Activated B cell treated with CpG ODN at 0.5 μM for 24 hours (primary cell): ENCODE measurements at regions of chr5 and their contacts with region 1.

Region 1: DNA sequence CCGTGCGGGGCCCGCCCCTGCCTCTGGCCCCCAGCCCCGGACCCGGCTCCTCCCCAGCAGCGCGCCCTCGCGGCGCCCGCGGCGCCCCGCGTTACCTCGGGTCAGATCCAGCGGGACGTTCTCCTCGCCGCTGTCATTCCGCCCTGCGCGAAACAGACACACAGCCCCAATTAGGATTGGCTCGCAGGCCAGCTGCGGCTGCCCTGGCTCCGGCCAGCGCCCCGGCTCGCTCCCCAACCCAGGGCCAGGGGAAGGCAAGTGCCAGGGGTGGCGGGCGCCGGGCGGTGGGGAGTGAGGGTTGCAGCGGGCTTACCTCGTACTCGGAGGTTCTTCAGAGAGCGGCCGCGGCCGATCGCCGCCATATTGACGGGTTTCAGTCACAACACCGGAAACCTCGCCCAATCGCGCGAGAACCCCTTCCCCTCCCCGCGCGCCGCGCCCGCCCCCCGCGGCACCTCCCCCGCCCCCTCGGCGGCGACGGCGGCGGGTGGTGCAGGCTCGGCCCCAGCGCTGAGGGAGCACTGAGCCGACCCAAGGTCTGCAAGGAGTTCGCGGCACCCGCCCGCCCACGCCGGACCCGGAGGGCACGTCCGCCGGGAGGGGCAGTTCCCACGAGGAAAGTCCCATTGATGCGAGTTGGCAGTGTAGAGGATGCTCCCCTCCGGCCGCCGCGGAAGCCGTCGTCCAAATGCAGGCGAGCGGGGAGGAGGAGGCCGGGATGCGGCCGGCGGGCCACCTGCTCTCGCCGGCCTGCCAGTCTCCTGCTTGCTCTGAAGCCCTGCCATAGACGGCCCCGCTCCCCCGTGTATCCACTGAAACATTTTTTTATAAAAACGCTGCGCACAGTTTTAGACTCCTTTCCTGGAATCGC is at the start of gene RICTOR:
- DNase-seq: peak; percentile 92
- ATAC-seq: peak; percentile 81
- H3K4me3 Mint-ChIP-seq: peak within 1 kb of the TSS; percentile 97
- H3K27ac Mint-ChIP-seq: peak within 1 kb of the TSS; percentile 96
- H3K4me1 Mint-ChIP-seq: peaks cover 53% of the 10 kb centered on the region
- H3K27me3 Mint-ChIP-seq: no peaks in the 10 kb centered on the region
- CTCF ChIP-seq: no peak
- total RNA-seq, gene RICTOR: 46.4 and 51.8 TPM in 2 replicates

Region 2: DNA sequence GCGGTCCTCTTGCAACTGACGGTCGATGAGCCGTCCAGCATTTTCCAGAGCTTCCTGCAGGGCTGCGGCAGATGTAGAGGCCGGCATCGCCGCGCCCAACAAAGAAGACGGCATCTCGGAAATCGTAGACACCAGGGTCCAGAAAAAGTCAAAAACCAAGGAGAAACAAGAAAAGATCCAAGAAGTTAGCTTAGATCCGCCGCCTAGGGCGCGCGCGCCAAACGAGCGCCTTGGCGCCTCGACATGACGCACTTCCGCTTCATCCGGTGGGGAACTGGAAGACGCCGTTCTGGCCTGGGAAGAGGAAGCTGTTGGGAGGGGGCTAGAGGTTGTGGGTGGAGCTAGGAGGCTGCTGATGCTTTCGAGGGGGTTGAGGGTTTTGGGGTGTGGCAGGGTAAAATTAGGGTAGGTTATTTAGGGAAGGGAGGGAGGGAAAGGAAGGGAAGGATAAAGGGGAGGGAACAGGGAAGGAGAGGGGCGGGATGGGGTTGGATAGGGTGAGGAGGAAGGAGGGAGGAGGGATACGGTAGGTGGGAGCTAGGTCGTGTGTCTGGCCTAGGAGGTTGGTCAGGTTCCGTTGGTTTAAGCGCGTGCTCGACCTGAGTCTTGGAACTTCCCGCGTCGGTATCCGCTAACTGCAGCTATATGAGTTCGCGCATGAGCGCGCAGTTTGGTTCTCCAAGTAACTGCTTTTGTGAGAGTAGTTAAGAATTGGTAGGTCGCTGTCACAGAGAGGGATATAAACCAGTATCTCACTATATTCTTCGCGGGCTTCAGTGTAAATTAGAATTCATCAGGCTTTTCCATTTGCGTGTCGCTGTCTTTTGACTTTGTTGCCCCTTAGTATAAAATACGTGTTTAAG is 1703.2 kb before region 1 on chr5 and contains the start of gene NUP155:
- CTCF ChIA-PET with region 1: no interaction called
- POLR2A ChIA-PET with region 1: no interaction called
- intact Hi-C with region 1: loop called (anchors 10 kb)
- DNase-seq: peak; percentile 79
- ATAC-seq: peak; percentile 94
- H3K4me3 Mint-ChIP-seq: peak within 1 kb of the TSS; percentile 99
- H3K27ac Mint-ChIP-seq: peak within 1 kb of the TSS; percentile 97
- H3K4me1 Mint-ChIP-seq: peaks cover 32% of the 10 kb centered on the region
- H3K27me3 Mint-ChIP-seq: no peaks in the 10 kb centered on the region
- CTCF ChIP-seq: no peak
- total RNA-seq, gene NUP155: 37.2 and 38.7 TPM in 2 replicates

Region 3: DNA sequence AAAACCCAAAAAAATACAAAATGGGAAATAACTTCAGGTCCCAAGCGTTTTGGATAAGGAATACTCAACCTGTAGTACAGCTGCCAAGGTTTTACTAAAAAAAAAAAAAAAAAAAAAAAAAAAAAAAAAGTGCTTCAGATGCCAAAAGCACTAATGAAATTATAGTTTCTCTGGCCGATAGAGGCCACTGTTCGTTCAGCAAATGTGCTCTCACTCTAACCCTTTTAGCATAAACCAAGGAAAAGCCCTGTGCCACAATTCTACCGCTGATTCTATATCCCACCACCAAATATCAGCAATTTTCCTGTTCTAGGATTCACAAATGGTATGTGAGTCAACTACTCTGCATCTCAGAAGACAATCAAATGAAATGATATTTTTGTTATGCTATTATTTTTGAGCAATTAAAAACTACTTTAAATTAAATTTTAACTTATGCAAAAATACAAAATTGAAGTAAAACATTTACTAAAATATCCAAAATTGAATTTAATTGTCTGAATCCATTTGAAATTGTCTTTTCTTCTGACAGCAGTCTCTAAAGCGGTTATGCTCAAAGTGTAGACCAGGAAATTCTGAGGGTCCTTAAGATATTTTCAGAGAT is 79.8 kb before region 1 on chr5:
- CTCF ChIA-PET with region 1: no interaction called
- POLR2A ChIA-PET with region 1: interaction called, 11 read pairs
- intact Hi-C with region 1: no loop called
- DNase-seq: no peak
- ATAC-seq: no peak
- H3K4me3 Mint-ChIP-seq: no peak overlapping the region
- H3K27ac Mint-ChIP-seq: no peak overlapping the region
- H3K4me1 Mint-ChIP-seq: peaks cover 4% of the 10 kb centered on the region
- H3K27me3 Mint-ChIP-seq: no peaks in the 10 kb centered on the region
- CTCF ChIP-seq: no peak

Region 4: GRCh38 chr5:39274398-39275085 is 200.3 kb after region 1 on chr5:
- CTCF ChIA-PET with region 1: no interaction called
- POLR2A ChIA-PET with region 1: no interaction called
- intact Hi-C with region 1: loop called (anchors 2 kb)
- DNase-seq: no peak
- ATAC-seq: peak; percentile 80
- H3K4me3 Mint-ChIP-seq: peak overlapping the region; percentile 81
- H3K27ac Mint-ChIP-seq: peak overlapping the region; percentile 94
- H3K4me1 Mint-ChIP-seq: peaks cover 32% of the 10 kb centered on the region
- H3K27me3 Mint-ChIP-seq: no peaks in the 10 kb centered on the region
- CTCF ChIP-seq: no peak

Region 5: DNA sequence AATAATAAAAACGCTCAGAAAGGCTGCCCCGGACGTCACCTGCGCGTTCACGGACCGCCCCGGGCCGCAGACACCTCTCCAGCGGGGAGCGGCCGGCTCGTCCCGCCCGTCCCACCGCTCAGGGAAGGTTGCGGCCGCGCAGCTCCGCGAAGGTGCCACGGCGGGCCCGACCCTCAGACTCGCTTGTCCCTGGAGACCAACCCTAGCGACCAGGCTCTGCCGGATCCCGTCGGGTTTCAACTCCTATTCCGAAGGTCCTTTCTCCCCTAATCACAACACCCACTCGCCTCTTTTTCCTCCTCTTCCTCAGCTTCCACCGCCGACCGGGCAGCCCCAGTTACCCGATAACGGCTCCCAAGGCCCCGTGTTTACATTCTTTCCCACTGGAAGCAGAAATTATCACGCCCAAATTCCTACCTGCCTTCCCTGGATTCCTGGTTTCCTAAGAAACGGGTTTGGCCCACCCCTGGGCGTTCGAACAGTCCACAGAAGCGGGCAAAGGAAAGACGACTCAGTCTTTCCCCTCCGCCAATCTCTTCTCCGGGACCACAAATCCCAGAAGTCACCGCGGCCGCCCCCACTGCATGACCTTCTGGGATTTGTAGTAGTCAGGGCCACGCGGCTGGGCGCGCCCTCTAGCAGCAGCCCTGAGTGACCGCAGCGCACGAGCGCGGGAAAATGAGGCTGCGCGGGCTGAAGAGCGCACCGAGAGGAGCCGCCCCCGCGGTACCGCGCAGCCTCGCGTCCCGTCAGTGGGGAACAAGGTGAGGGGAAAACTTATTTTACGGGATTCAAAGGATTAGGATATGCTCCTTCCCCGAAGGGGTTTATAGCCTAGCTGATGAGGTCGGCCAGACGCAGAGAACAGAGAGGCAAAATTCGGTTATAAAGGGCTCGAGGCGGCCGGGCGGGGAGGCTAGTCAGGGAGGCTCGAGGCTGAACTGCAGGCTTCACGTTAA is 1681.4 kb after region 1 on chr5 and contains the start of gene TTC33:
- CTCF ChIA-PET with region 1: no interaction called
- POLR2A ChIA-PET with region 1: no interaction called
- intact Hi-C with region 1: loop called (anchors 1 kb)
- DNase-seq: peak; percentile 88
- ATAC-seq: peak; percentile 93
- H3K4me3 Mint-ChIP-seq: no peak within 1 kb of the TSS
- H3K27ac Mint-ChIP-seq: no peak within 1 kb of the TSS
- H3K4me1 Mint-ChIP-seq: peaks cover 7% of the 10 kb centered on the region
- H3K27me3 Mint-ChIP-seq: no peaks in the 10 kb centered on the region
- CTCF ChIP-seq: no peak
- total RNA-seq, gene TTC33: 9.0 and 9.2 TPM in 2 replicates

Region 6: DNA sequence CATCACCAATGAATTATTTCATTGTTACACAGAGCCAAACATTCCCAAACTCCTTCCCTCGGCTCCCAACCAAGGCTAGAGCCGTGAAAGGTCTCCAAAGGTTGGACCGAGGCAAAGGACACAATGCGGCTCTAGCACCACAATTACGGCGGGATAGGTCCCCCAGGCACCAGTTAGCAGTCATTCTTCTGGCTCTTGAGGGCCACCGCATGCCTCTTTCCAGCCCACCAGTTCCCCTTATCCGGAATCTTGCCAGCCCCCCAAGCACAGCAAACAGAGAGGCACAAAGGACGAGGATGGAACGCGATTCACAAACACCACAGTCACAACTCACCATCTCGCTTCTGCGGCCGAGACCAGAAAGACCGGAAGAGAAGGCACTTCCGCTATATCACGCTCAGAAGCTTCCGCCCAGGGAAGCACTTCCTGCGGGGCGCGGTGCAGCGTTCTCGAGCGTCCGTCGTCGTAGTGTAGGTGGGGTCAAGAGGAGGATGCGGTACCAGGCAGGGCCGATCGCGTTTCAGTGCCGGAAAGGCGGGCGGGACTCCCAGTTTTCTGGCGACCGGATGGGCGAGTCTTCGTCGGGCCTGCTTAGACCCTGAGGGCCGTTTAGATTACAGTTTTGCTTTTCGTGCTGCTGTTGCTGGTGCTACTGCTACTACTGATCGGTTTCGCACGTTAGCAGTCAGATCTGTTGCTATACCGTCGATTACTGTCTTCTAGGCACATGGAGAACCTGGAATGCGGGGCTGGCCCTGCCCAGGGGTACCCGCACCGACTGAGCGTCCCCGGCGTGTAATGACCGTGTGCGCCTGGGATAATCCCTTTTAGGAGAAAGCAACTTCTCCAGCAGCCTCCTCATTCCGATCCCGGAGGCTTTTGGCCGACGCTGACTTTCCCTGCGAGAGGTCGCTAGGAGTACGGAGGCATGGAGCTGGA is 1760.9 kb after region 1 on chr5 and contains the start of gene RPL37:
- CTCF ChIA-PET with region 1: no interaction called
- POLR2A ChIA-PET with region 1: interaction called, 3 read pairs
- intact Hi-C with region 1: loop called (anchors 2 kb)
- DNase-seq: peak; percentile 80
- ATAC-seq: peak; percentile 98
- H3K4me3 Mint-ChIP-seq: peak within 1 kb of the TSS; percentile 100
- H3K27ac Mint-ChIP-seq: peak within 1 kb of the TSS; percentile 99
- H3K4me1 Mint-ChIP-seq: peaks cover 49% of the 10 kb centered on the region
- H3K27me3 Mint-ChIP-seq: no peaks in the 10 kb centered on the region
- CTCF ChIP-seq: no peak
- total RNA-seq, gene RPL37: 2,223 and 2,547 TPM in 2 replicates